ENCODE measurements at regions of chr6 and their contacts with region 1.

Region 1: GRCh38 chr6:66687611-66688140 is 980.6 kb upstream of the EYS start:
- DNase-seq: no peak
- H3K4me3 Mint-ChIP-seq: no peak overlapping the region
- H3K27ac Mint-ChIP-seq: no peak overlapping the region
- H3K4me1 Mint-ChIP-seq: no peaks in the 10 kb centered on the region
- H3K27me3 Mint-ChIP-seq: no peaks in the 10 kb centered on the region

Region 2: GRCh38 chr6:66913674-66914073 is 226.0 kb after region 1 on chr6:
- CTCF ChIA-PET with region 1: no interaction called
- POLR2A ChIA-PET with region 1: no interaction called
- intact Hi-C with region 1: loop called (anchors 2 kb)
- DNase-seq: no peak
- H3K4me3 Mint-ChIP-seq: no peak overlapping the region
- H3K27ac Mint-ChIP-seq: no peak overlapping the region
- H3K4me1 Mint-ChIP-seq: no peaks in the 10 kb centered on the region
- H3K27me3 Mint-ChIP-seq: no peaks in the 10 kb centered on the region